HCT116 (cell line): ENCODE measurements at regions of chr1 and their contacts with region 1.

Region 1: DNA sequence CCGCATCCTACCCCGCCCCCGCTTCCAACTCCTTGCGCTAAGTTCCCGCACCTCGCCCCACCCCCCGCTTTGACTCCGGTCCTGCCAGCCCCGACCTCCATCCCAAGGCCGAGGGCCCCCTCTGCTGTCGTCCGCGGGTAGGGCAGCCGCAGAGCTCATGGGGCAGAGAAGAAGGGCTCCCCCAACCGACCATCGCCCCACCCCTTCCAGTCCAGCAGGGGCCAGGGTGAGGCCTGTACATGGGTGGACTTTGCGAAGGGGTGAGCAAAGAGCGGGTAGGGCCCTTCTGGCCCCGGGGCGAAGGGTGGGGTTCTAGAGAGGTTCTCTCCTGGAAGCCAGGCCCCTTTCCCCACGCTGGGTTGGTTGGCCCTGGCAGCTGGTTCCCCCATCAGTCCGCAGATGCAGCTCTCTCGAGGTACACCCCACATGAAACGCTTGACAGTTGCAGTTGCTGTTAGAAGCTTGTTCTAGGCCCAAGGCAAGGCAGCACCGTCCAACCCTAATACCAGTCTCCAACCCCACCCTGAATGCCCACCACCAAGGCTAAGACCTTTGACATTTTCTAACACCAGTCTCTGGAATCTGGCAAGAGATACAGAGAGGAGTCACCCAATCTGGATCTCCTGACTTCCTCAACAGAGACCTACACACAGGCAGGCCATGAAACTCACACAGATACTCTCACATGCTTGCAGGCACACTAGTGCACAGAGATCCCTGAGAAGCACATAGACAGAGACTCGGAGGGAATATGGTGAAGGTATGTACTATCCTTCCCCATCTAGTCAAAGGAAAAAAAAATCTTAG is 25.3 kb upstream of the ADGRB2 start:
- DNase-seq: peak; percentile 75
- ATAC-seq: peak; percentile 86
- H3K4me3 ChIP-seq: peak overlapping the region; percentile 66 to 76
- H3K27ac ChIP-seq: no peak overlapping the region
- H3K4me1 ChIP-seq: peaks cover 3 to 22% of the 10 kb centered on the region in 2 experiments; a peak in 3 of 4 replicates
- H3K27me3 ChIP-seq: no peaks in the 10 kb centered on the region
- CTCF ChIP-seq: peak; percentile 91 to 98 (median 92)
- POLR2A ChIP-seq: no peak
- RAD21 ChIP-seq: peak; percentile 98

Region 2: GRCh38 chr1:31182352-31182751 is 607.1 kb before region 1 on chr1:
- CTCF ChIA-PET with region 1: interaction called, 15 read pairs
- POLR2A ChIA-PET with region 1: no interaction called
- RAD21 ChIA-PET with region 1: no interaction called
- intact Hi-C with region 1: loop called (anchors 10 kb)
- DNase-seq: peak; percentile 69
- ATAC-seq: peak; percentile 66
- H3K4me3 ChIP-seq: peak overlapping the region; percentile 26 to 41
- H3K27ac ChIP-seq: no peak overlapping the region
- H3K4me1 ChIP-seq: peaks cover 7 to 18% of the 10 kb centered on the region in 2 experiments; a peak in 3 of 4 replicates
- H3K27me3 ChIP-seq: peaks cover 3% of the 10 kb centered on the region; the same call in 1 of the 2 replicates
- CTCF ChIP-seq: peak in 2 of 3 experiments; percentile 39 to 55; a peak in 4 of 6 replicates
- POLR2A ChIP-seq: no peak
- RAD21 ChIP-seq: no peak

Region 3: GRCh38 chr1:31405578-31406245 is 383.8 kb before region 1 on chr1:
- CTCF ChIA-PET with region 1: no interaction called
- POLR2A ChIA-PET with region 1: no interaction called
- RAD21 ChIA-PET with region 1: no interaction called
- intact Hi-C with region 1: no loop called
- DNase-seq: no peak
- ATAC-seq: no peak
- H3K4me3 ChIP-seq: no peak overlapping the region
- H3K27ac ChIP-seq: no peak overlapping the region
- H3K4me1 ChIP-seq: no peaks in the 10 kb centered on the region
- H3K27me3 ChIP-seq: no peaks in the 10 kb centered on the region
- CTCF ChIP-seq: no peak
- POLR2A ChIP-seq: no peak
- RAD21 ChIP-seq: no peak

Region 4: DNA sequence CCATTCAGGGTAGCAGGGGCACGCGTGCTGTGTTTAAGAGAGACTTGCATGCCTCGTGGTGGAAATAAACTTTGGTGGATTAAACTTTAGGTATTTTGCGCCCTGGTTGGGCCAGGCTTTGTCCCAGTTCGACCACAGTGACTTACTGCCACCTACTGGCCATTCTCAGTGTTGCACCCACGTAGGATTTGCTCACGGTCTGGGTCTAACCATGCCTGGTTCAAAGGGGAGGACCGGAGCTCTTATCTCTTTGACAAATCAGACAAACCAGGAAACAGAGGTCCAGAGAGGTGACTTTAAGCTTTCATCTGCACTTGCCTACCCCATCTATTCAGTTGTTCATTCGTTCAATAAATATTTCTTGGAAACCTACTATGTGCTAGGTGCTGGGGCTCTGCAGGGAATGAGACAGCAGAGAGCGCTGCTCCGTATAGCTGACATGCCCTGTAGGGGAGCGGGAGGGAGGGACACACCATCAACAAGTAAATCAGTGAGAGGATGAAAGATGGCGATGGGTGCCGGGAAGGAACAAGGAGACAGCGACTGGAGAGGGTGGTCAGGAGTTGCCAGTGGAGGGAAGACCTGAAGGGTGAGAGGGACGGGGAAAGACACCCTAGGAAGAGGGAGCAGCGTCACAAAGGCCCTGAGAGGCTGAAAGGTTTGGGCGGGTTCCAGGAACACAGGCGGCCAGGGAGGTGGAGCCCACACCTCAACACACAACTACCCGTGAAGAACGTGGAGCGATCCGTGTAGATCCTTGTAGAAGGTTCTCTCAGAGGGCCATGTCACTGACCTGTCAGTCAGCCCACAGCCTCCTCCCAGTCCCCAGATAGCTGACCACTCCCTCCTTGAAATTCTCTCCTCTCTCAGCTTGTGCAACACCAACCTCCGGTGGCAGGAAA is 240.3 kb before region 1 on chr1:
- CTCF ChIA-PET with region 1: interaction called, 28 read pairs
- POLR2A ChIA-PET with region 1: no interaction called
- RAD21 ChIA-PET with region 1: interaction called, 6 to 9 read pairs
- intact Hi-C with region 1: loop called (anchors 2 kb)
- DNase-seq: peak; percentile 84
- ATAC-seq: peak; percentile 92
- H3K4me3 ChIP-seq: peak overlapping the region; percentile 41 to 52
- H3K27ac ChIP-seq: peak overlapping the region; percentile 44
- H3K4me1 ChIP-seq: peaks cover 12 to 21% of the 10 kb centered on the region in 2 experiments; a peak in 3 of 4 replicates
- H3K27me3 ChIP-seq: no peaks in the 10 kb centered on the region
- CTCF ChIP-seq: peak; percentile 89 to 98 (median 96)
- POLR2A ChIP-seq: peak; percentile 23
- RAD21 ChIP-seq: peak; percentile 96

Region 5: GRCh38 chr1:31663622-31664452 is 125.6 kb before region 1 on chr1:
- CTCF ChIA-PET with region 1: interaction called, 105 read pairs
- POLR2A ChIA-PET with region 1: interaction called, 8 read pairs
- RAD21 ChIA-PET with region 1: interaction called, 22 to 28 read pairs
- intact Hi-C with region 1: loop called (anchors 1 kb)
- DNase-seq: peak; percentile 13
- ATAC-seq: peak; percentile 79
- H3K4me3 ChIP-seq: no peak overlapping the region
- H3K27ac ChIP-seq: no peak overlapping the region
- H3K4me1 ChIP-seq: peaks cover 9 to 12% of the 10 kb centered on the region in 2 experiments
- H3K27me3 ChIP-seq: no peaks in the 10 kb centered on the region
- CTCF ChIP-seq: peak; percentile 90 to 95 (median 93)
- POLR2A ChIP-seq: no peak
- RAD21 ChIP-seq: peak; percentile 98

Region 6: GRCh38 chr1:31715087-31715872 is 74.2 kb before region 1 on chr1:
- CTCF ChIA-PET with region 1: interaction called, 26 read pairs
- POLR2A ChIA-PET with region 1: interaction called, 5 read pairs
- RAD21 ChIA-PET with region 1: interaction called, 3 to 7 read pairs
- intact Hi-C with region 1: loop called (anchors 2 kb)
- DNase-seq: peak; percentile 75
- ATAC-seq: peak; percentile 94
- H3K4me3 ChIP-seq: peak overlapping the region; percentile 46 to 65
- H3K27ac ChIP-seq: peak overlapping the region; percentile 56
- H3K4me1 ChIP-seq: peaks cover 23 to 51% of the 10 kb centered on the region in 2 experiments
- H3K27me3 ChIP-seq: peaks cover 6% of the 10 kb centered on the region; the same call in 1 of the 2 replicates
- CTCF ChIP-seq: peak; percentile 55 to 96 (median 74)
- POLR2A ChIP-seq: peak; percentile 62
- RAD21 ChIP-seq: peak; percentile 54

Region 7: DNA sequence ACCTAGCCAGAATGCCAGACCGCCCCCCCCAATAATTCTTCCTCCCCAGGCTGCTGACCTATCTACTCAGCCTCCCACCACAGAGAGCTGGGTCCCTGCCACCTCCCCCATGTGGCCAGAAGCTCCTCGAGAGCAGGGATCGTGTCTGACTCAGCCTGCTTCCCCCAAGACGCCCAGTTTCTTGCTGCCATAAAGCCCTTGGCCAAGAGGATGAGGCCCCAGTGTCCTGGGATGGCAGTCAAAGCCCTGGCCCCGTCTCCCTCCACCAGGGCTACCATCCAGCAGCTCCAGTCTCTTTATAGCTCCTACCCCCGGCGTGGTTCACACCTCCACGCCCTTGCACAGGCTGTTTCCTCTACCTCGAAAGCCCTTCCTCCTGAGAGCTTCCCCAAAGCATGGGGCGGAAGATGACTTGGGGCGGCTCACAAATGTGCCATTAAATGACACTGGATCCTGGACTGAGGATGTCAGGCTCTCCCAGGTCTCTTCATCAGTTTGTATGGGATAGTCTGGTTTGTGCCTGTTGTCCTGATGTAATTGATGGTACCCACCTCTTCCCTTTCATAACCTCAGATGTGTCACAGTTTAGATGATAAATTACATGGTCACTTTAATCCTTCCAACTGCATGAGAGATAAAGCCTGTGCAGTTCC is 38.5 kb before region 1 on chr1:
- CTCF ChIA-PET with region 1: interaction called, 14 read pairs
- POLR2A ChIA-PET with region 1: no interaction called
- RAD21 ChIA-PET with region 1: interaction called in 1 of 2 experiments, 11 read pairs
- intact Hi-C with region 1: no loop called
- DNase-seq: no peak
- ATAC-seq: no peak
- H3K4me3 ChIP-seq: no peak overlapping the region
- H3K27ac ChIP-seq: no peak overlapping the region
- H3K4me1 ChIP-seq: peaks cover 11 to 17% of the 10 kb centered on the region in 2 experiments
- H3K27me3 ChIP-seq: no peaks in the 10 kb centered on the region
- CTCF ChIP-seq: no peak
- POLR2A ChIP-seq: no peak
- RAD21 ChIP-seq: no peak

Region 8: DNA sequence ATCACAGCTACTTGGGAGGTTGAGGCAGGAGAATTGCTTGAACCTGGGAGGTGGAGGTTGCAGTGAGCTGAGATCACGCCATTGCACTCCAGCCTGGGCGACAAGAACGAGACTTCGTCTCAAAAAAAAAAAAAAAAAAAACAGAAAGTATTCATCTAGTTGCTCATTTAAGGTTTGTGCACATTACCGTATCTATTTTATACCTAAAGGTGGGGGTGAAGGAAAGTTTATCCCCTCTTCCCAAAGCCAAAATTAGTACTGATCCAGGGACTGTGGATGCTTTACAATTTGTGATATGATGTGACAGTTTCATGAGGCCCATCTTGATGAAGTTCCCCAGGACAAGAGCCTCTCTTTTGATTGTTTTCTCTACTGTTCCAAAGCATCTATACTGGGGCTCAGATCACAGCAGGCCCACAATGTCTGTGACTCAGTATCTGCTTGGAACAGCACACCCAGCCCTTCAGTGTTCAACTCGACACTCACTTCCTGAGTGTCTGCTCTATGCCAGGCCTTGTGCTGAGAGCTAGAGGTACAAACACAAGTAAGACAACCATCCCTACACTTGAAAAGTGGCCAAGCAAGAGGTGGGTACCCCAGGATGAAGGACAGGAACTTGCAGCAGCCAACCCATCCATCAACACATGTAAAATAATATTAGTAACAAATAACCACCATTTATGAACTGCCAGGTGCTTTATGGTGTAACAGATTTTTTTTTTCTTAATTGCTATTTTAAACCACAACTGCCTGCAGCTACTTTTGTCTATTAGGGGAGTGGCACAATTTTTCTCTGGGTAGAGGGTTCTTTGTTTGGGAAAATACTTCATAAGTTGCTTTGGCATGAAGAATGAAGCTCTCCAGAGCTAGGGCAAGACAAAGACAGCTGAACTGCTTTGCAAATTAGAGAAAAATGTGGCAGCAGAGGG is 195.2 kb after region 1 on chr1:
- CTCF ChIA-PET with region 1: no interaction called
- POLR2A ChIA-PET with region 1: no interaction called
- RAD21 ChIA-PET with region 1: no interaction called
- intact Hi-C with region 1: no loop called
- DNase-seq: no peak
- ATAC-seq: no peak
- H3K4me3 ChIP-seq: no peak overlapping the region
- H3K27ac ChIP-seq: no peak overlapping the region
- H3K4me1 ChIP-seq: no peaks in the 10 kb centered on the region
- H3K27me3 ChIP-seq: no peaks in the 10 kb centered on the region
- CTCF ChIP-seq: no peak
- POLR2A ChIP-seq: no peak
- RAD21 ChIP-seq: no peak